ENCODE measurements at regions of chr16 and their contacts with region 1.

Region 1: GRCh38 chr16:13919683-13920509 is at the start of gene ERCC4:
- DNase-seq: peak; percentile 100
- H3K4me3 ChIP-seq: peak within 1 kb of the TSS; percentile 59 to 73
- H3K27ac ChIP-seq: peak within 1 kb of the TSS; percentile 49 to 67
- H3K4me1 ChIP-seq: peaks cover 7% of the 10 kb centered on the region
- H3K27me3 ChIP-seq: no peaks in the 10 kb centered on the region
- CTCF ChIP-seq: peak; percentile 85 to 99 (median 96)
- POLR2A ChIP-seq: no peak
- total RNA-seq, gene ERCC4: 7.6 to 13.3 TPM

Region 2: DNA sequence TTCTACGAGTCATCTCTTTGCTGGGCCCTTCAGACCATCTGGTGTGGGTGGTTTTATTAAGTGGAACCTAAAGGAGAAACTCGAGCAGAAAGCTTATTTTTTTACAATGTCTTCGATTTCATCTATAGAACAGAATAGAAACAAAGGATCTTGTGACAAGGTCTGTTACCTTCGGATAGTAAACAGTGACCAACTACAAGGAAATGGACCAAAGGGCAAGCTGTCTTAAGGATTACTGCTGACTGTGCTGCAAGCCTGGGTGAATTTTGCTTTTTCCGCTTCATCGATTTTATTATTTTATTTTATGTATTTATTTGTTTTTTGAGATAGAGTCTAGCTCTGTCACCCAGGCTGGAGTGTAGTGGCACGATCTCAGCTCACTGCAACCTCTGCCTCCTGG is 348.9 kb before region 1 on chr16:
- intact Hi-C with region 1: no loop called
- DNase-seq: no peak
- H3K4me3 ChIP-seq: no peak overlapping the region
- H3K27ac ChIP-seq: no peak overlapping the region
- H3K4me1 ChIP-seq: no peaks in the 10 kb centered on the region
- H3K27me3 ChIP-seq: no peaks in the 10 kb centered on the region
- CTCF ChIP-seq: no peak
- POLR2A ChIP-seq: no peak

Region 3: DNA sequence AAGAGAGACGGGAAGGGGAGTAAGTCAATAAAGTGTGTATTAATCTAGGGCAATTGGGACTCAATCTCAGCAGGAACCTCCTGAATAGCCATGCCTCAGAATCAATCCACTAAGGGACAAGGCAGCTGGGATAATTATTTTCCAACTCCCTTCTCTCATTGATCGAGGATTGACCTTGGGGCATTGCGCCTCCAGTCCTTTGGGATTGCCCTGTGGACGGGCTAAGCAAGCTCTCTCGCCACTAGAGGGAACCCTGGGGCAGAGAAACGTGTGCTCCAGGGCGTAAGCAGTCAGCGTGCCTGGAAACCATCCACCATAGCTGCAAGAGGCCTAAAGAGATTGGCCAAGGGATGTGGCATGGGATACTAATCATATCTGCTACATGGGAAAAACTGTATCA is 53.8 kb before region 1 on chr16:
- intact Hi-C with region 1: loop called (anchors 5 kb)
- DNase-seq: peak; percentile 70
- H3K4me3 ChIP-seq: no peak overlapping the region
- H3K27ac ChIP-seq: no peak overlapping the region
- H3K4me1 ChIP-seq: no peaks in the 10 kb centered on the region
- H3K27me3 ChIP-seq: no peaks in the 10 kb centered on the region
- CTCF ChIP-seq: peak in 3 of 4 experiments; percentile 38 to 68 (median 65)
- POLR2A ChIP-seq: no peak

Region 4: DNA sequence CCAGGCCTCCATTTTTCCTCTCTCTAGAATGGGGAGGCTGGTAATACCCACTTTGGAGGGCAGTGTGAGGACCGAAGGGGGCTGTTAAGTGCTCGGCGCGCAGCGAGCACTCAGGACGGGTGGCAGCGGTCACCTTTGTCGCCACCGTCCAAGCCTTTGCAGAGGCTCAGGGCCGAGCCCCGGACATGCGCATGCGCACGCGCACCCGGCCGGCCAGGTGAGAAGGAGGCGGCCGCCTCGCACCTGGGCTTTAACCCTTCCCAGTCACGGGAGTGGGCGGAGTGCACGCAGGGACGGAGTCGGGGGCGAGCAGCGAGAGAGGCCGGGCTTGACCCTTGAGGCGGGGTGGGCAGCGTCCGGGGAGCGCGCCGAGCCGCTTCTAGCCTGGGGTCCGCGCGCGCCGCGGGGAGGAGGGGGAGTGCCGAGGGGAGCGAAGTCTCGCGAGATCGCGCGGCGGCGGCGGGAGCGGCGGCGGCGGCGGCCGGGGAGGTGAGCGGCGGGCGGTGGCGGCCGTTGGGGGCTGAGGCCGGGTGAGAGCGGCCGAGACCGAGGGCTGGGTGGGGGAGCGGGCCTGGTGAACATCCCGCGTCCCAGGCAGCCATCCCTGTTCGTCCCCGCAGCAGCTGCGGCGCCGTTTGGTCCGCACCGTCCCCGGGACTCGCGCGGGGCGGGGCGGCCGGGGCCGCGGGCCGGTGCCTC is 151.1 kb after region 1 on chr16 and contains the start of gene MRTFB:
- intact Hi-C with region 1: loop called (anchors 10 kb)
- DNase-seq: peak; percentile 77
- H3K4me3 ChIP-seq: peak within 1 kb of the TSS; percentile 87 to 91
- H3K27ac ChIP-seq: peak within 1 kb of the TSS; percentile 89 to 90
- H3K4me1 ChIP-seq: no peaks in the 10 kb centered on the region
- H3K27me3 ChIP-seq: no peaks in the 10 kb centered on the region
- CTCF ChIP-seq: no peak
- POLR2A ChIP-seq: peak; percentile 32
- total RNA-seq, gene MRTFB: 46.5 to 102 TPM

Region 5: DNA sequence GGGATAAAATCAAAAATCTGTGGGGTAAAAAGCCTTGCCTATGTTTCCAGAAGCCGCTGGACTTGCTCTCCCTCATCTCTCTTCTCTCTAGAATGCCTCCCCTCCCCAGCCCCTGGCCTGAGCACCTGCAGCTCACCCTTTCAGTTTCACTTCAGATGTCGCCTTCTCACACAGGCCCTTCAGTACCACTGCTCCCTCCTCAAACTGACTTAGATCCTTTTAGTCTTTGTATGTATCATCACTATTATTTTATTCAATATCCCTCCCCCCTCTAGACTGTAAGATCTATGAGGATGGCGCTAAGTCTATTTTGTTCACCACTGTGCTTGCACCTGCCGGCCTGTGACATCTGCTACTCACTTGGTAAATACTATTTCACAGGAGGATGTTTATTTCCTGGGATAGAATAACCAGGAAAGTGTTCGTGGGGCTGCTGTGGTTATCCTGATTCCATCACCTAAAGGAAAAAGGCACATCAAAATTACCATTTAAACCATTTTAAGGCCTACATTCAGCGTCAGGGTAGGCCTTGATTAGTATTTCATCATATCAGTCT is 273.5 kb after region 1 on chr16:
- intact Hi-C with region 1: loop called (anchors 5 kb)
- DNase-seq: no peak
- H3K4me3 ChIP-seq: no peak overlapping the region
- H3K27ac ChIP-seq: no peak overlapping the region
- H3K4me1 ChIP-seq: no peaks in the 10 kb centered on the region
- H3K27me3 ChIP-seq: no peaks in the 10 kb centered on the region
- CTCF ChIP-seq: no peak
- POLR2A ChIP-seq: no peak

Region 6: GRCh38 chr16:14249291-14250032 is 329.6 kb after region 1 on chr16:
- intact Hi-C with region 1: loop called (anchors 10 kb)
- DNase-seq: no peak
- H3K4me3 ChIP-seq: no peak overlapping the region
- H3K27ac ChIP-seq: no peak overlapping the region
- H3K4me1 ChIP-seq: no peaks in the 10 kb centered on the region
- H3K27me3 ChIP-seq: no peaks in the 10 kb centered on the region
- CTCF ChIP-seq: peak in 3 of 4 experiments; percentile 50 to 68 (median 68)
- POLR2A ChIP-seq: no peak

Region 7: DNA sequence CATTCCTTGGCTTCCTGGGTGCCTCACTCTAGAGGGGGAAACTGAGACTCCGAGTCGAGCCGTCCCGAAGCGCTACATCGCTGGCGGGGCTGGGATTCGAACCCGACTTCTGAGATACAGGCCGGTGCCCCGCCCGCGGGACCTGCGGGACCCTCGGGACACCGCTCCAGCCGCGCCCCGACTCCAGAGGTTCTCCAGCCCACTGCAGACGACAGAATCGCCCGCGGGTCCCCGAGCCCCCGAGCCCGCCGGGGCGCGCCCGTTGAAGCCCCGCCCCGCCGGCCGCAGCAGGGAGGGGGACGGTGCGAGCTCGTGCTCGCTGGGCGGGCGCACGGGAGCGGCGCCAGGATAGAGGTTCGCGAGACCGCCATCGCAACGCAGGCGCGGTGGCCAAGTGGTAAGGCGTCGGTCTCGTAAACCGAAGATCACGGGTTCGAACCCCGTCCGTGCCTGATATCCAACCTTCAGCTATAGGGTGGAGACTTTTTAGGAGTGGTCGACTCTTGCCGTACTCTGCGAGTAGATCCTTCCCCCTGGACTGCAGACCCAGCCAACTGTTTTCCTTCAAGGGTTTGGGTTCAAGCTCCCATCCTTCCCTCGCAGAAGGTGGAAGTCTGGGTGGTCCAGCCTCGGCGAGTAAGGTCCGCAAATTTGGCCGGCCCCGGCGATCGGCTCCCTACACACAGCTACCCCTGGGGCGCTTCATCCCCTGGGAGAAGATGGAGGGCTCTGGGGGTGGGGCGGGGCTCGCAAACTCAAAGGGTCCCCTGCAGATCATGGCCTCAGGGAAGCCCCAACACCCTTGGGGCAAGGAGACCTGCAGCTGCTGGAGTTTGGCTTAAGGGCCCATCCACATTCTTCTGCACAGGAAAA is 365.9 kb after region 1 on chr16:
- intact Hi-C with region 1: loop called (anchors 5 kb)
- DNase-seq: peak; percentile 89
- H3K4me3 ChIP-seq: peak overlapping the region; percentile 79 to 86
- H3K27ac ChIP-seq: peak overlapping the region; percentile 91 to 92
- H3K4me1 ChIP-seq: no peaks in the 10 kb centered on the region
- H3K27me3 ChIP-seq: no peaks in the 10 kb centered on the region
- CTCF ChIP-seq: peak in 1 of 4 experiments; percentile 3
- POLR2A ChIP-seq: no peak

Region 8: DNA sequence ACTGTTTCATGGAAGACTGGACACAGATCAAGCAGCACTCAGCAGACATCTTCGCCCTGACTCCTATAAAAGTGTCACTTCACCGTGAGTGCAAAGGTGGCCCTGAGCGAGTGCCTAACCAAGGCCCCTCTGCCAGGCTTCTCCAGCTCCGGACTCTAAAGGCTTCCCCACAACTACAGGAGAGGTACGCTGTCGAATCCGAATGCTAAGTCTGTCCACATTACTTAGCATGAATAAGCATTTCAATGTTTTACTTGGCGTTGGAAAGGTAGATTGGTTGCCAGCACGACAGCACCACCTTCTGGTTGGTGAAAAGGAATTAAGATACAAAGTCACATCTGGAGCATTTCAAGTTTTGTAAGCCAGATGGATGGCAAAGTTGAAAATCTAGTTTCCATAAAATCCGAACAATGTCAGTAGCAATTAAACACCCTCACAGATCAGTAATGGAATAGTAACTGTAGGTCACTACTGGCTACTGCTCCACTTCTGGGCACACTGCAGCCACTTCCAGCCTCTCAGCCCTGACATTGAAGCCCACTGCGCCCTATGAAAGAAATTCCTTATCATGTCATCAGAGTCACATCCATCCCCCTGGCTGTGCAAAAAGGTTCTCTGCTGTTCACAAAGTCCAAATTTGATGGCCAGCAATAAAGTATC is 609.2 kb after region 1 on chr16:
- intact Hi-C with region 1: loop called (anchors 2 kb)
- DNase-seq: peak; percentile 81
- H3K4me3 ChIP-seq: no peak overlapping the region
- H3K27ac ChIP-seq: peak overlapping the region; percentile 43 to 60
- H3K4me1 ChIP-seq: peaks cover 7% of the 10 kb centered on the region
- H3K27me3 ChIP-seq: no peaks in the 10 kb centered on the region
- CTCF ChIP-seq: peak; percentile 74 to 94 (median 86)
- POLR2A ChIP-seq: no peak